Esophagus muscularis mucosa (tissue), 4 donors: ENCODE measurements at regions of chr7 and their contacts with region 1.

Region 1: DNA sequence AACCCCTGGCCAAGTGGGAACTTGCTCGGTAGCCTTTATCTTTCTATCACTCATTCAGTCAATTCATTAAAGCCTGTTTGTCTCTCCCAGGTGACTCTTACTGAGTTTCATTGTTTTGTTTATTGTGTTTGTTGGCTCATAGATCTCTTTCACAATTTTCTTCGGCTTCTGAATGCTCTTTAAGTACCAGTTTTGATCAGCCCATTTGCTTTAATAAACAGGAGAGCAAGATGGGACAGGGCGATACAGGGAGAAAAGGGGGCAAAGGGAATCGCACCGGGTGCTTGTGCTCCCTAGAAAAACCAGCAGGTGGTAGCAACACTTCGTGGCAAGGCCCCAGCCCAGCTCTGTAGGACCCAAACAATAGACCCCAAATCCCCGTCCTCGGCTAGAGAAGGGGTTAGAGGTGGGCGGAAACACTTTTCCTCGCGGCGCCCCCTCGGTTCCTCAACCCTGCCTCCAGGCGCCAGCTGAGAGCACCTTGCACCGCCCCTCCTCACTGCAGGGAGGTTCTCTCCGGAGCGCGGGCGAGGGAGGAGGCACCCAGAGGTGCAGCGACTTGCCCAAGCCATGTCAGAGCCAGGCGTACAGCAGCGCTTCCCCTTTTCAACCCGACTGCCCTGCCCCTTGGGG is 1.0 kb upstream of the EPHB6 start:
- DNase-seq: no peak
- H3K4me3 ChIP-seq: peak overlapping the region; percentile 72 to 90 (median 76)
- H3K27ac ChIP-seq: peak overlapping the region; percentile 66 to 75 (median 69)
- H3K4me1 ChIP-seq: peaks cover 12 to 28% (median 24%) of the 10 kb centered on the region in 4 donors
- H3K27me3 ChIP-seq: peaks cover 0 to 6% (median 0%) of the 10 kb centered on the region in 4 donors
- CTCF ChIP-seq: peak; percentile 76 to 82 (median 81)
- EP300 ChIP-seq: no peak
- POLR2A ChIP-seq: no peak

Region 2: DNA sequence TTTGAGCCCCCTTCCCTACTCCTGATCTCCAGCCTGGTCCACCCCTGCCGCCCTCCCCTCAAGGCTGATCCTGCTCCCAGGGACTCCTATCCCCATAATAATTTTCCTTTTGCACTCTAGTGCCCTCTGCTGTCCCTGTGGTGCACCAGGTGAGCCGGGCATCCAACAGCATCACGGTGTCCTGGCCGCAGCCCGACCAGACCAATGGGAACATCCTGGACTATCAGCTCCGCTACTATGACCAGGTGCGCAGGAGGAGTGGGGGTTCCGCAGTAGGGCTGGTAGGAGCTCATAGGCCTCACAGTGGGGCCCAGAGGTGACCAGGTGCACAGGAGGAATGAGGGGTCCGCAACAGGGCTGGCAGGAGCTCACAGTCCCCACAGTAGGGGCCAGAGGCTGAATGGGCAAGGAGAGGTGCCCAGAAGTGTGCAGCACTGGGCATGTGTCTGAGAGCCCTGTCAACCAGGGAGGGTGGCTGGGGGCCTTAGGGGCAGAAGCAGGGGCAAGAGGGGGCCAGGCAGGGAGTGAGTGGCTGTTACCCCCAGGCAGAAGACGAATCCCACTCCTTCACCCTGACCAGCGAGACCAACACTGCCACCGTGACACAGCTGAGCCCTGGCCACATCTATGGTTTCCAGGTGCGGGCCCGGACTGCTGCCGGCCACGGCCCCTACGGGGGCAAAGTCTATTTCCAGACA is 12.7 kb after region 1 on chr7:
- intact Hi-C with region 1: loop called (anchors 1 kb)
- DNase-seq: peak; percentile 83
- H3K4me3 ChIP-seq: no peak overlapping the region
- H3K27ac ChIP-seq: no peak overlapping the region
- H3K4me1 ChIP-seq: no peaks in the 10 kb centered on the region
- H3K27me3 ChIP-seq: peaks cover 0 to 10% (median 0%) of the 10 kb centered on the region in 4 donors
- CTCF ChIP-seq: peak; percentile 44 to 66 (median 46)
- EP300 ChIP-seq: no peak
- POLR2A ChIP-seq: no peak

Region 3: DNA sequence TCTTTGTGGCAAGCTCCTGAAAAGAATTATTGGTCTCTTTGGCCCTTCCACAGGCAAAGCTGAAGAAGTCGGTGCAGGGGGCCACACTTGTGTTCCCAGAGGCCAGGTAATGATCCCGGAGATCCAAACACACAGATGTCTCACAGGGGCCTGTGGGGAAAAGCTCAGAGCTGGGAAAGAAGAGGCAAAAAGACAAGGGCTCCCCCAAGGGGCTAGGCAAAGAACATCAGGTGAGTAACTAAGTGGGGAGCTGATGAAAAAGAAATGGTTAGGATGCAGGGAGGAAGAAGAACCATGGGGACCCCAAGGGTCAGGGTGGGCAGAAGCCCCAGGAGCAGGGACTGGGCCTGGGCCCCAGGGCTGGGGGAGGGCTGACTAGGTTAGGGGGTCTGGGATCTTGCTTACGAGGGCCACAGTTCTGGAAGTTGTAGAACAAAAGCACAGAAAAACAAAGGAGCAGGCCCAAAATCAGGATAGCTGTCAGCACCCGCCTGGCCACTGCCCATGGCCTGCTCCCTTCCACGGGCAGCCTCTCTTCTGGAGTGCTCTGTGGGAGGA is 107.2 kb after region 1 on chr7:
- intact Hi-C with region 1: no loop called
- DNase-seq: no peak
- H3K4me3 ChIP-seq: no peak overlapping the region
- H3K27ac ChIP-seq: no peak overlapping the region
- H3K4me1 ChIP-seq: no peaks in the 10 kb centered on the region
- H3K27me3 ChIP-seq: peaks cover 0 to 10% (median 0%) of the 10 kb centered on the region in 4 donors
- CTCF ChIP-seq: no peak
- EP300 ChIP-seq: no peak
- POLR2A ChIP-seq: no peak

Region 4: DNA sequence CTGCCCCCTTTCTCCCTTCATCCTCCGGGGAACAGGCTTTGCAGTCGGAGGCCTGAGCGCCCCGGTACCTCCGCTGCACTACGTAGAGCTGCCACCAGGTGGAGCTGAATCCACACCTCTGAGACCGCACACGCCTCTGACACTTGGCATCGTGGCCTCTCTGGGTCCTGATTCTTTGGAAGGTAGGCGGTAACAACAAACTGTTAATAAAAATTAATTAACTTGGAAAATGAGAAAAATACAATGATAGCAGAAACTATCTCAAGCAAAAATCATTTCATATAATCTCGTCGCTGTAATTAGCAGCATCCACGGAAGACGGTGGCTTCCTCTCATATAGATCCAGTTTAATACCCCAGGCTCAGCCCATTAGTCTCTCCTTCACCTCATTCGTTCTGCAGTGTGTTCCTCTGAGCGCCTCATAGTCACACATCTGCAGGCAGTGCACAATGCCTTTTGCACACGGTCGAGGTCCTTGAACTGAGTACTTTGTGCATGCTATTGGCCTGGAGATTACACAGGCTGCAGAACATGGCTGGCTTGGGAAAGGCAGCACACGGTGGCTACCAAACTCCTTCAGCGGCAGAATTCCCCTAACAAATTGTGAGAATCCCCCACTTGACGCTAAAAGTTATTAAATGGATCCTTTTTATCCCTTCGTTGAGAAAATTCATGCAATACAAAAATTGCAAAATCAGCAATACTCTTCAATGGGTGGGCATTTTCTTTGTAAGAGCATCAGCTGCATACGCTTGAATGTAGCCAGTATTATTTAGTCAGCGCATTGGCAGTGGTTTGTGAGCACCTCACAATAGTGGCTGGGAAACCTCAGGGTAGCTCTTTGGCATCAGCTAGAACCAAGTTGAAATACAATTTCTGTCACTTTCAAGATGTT is 154.4 kb after region 1 on chr7:
- intact Hi-C with region 1: loop called (anchors 5 kb)
- DNase-seq: peak; percentile 94
- H3K4me3 ChIP-seq: no peak overlapping the region
- H3K27ac ChIP-seq: no peak overlapping the region
- H3K4me1 ChIP-seq: peaks cover 0 to 9% (median 5%) of the 10 kb centered on the region in 4 donors
- H3K27me3 ChIP-seq: peaks cover 0 to 14% (median 0%) of the 10 kb centered on the region in 4 donors
- CTCF ChIP-seq: peak; percentile 92 to 99 (median 93)
- EP300 ChIP-seq: no peak
- POLR2A ChIP-seq: no peak

Region 5: GRCh38 chr7:143214789-143215679 is 361.2 kb after region 1 on chr7:
- intact Hi-C with region 1: loop called (anchors 2 kb)
- DNase-seq: no peak
- H3K4me3 ChIP-seq: no peak overlapping the region
- H3K27ac ChIP-seq: no peak overlapping the region
- H3K4me1 ChIP-seq: peaks cover 0 to 14% (median 4%) of the 10 kb centered on the region in 4 donors
- H3K27me3 ChIP-seq: peaks cover 0 to 2% (median 0%) of the 10 kb centered on the region in 4 donors
- CTCF ChIP-seq: peak in 2 of 3 experiments; percentile 98 to 99
- EP300 ChIP-seq: no peak
- POLR2A ChIP-seq: no peak